ENCODE measurements at regions of chr18 and their contacts with region 1.

Region 1: GRCh38 chr18:36470896-36471295 is 173.4 kb downstream of the FHOD3 start:
- DNase-seq: no peak
- ATAC-seq: no peak
- H3K4me3 ChIP-seq: no peak overlapping the region
- H3K4me3 Mint-ChIP-seq: no peak overlapping the region
- H3K27ac ChIP-seq: no peak overlapping the region
- H3K27ac Mint-ChIP-seq: no peak overlapping the region
- H3K4me1 ChIP-seq: no peaks in the 10 kb centered on the region
- H3K4me1 Mint-ChIP-seq: no peaks in the 10 kb centered on the region
- H3K27me3 ChIP-seq: peaks cover 0 to 17% of the 10 kb centered on the region in 2 experiments
- H3K27me3 Mint-ChIP-seq: peaks cover 2 to 5% of the 10 kb centered on the region in 2 donors

Region 2: DNA sequence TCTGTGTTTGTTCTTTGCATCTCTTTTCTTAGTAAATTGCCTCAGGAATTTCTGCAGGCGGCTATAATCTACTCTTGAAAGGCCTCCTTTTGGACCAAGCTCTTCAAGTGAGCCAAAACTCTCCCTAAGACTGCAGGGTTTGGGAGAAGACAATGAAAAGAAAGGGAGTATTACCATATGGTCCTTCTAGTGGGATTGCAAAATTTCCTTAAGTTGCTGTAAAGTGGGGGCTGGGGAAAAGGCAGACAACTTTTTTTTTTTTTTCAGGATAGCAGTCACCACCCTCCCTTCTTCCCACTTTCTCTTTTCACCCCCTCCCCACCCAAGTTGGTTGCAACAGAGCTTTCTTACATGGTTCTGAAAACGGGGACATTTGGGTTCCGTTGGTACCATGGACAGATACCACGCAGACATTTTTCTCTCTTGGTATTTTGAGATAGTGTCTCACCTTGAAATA is 10.3 kb after region 1 on chr18:
- CTCF ChIA-PET with region 1: no interaction called
- POLR2A ChIA-PET with region 1: interaction called in 1 of 2 experiments, 11 read pairs
- DNase-seq: no peak
- ATAC-seq: no peak
- H3K4me3 ChIP-seq: no peak overlapping the region
- H3K4me3 Mint-ChIP-seq: no peak overlapping the region
- H3K27ac ChIP-seq: no peak overlapping the region
- H3K27ac Mint-ChIP-seq: no peak overlapping the region
- H3K4me1 ChIP-seq: no peaks in the 10 kb centered on the region
- H3K4me1 Mint-ChIP-seq: no peaks in the 10 kb centered on the region
- H3K27me3 ChIP-seq: peaks cover 0 to 11% of the 10 kb centered on the region in 2 experiments
- H3K27me3 Mint-ChIP-seq: peaks cover 0 to 11% of the 10 kb centered on the region in 2 donors